Left cardiac atrium (tissue), 4 donors: ENCODE measurements at regions of chr20 and their contacts with region 1.

Region 1: GRCh38 chr20:13119583-13119982 is 101.5 kb upstream of the ISM1 start:
- DNase-seq: no peak
- ATAC-seq: peak; percentile 79 to 91

Region 2: DNA sequence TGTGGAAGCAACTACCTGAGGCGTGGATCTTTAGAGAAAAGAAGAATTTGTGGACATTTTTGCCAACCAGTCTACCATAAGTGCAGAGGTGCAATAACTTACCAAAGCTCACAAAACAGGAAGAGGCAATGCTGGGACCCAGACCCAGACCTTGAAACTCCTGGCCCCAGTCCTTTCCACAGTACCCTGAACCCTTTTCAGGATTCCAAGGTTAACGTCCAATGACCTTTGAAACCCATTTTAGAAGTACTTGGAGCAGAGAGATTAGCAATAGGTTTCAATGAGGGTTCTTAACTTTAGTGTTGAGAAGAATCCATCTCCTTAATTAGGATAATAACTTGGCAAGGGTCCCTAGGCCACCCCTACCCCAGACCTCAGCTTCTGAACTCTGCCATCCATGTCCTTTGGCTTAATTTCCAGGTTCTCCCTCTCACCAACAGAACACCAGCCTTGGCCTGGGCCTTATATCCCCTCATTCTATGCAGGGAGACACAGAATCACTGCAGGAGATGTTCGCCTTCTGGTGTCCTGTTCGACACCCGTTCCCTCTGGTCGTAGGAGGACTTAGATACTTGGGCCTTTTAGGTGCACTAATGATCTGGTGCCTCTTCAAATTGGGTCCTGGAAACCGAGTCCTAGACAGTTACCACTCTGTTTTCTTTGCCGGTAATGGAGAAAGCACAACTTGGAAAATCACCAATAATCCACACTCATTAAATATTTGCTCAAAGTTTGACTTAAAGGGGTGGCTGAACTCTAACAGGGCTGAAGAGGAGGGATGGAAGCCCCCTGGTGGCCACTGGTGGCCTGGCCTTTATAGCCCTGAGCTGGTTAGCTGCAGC is 142.1 kb after region 1 on chr20:
- intact Hi-C with region 1: loop called in 1 of 2 experiments (anchors 5 kb)
- DNase-seq: peak; percentile 61
- ATAC-seq: peak; percentile 58 to 77

Region 3: DNA sequence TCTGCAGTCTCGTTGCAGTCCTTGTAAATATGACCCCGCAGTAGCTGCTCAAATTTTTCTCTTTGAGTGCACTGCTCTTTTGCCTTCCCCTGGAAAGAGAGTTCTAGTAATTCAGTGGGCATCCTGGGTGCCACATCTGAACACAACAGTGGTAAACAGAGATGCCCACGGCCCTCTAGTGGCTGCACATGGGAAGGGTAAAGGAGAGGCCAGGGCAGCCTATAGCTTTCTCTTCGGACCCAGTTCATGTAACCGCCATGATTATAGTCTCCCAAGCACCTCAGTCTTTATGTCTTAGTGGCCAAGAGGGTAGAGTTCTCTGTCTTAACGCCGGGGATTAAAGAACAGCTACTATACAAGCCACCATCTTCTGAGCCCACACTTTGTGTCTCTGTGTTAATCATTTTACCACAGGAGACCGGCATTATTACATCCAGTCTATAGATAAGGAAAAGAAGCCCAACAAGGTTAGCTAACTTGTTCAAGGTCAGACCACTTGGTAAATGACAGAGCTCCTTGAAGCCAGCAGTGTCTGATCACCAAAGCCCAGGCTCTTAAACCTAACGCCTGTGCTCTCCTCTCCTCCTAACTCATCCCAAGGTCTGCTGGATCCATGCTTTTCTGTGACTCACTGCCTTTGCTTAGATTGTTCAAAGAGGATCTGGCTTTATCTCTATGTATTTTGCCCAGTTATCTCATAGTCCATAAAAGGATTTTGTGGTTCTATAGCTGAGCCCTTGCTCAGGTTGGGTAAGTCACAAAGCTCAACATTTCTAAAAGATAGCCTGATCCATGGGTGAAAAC is 183.3 kb after region 1 on chr20:
- intact Hi-C with region 1: loop called (anchors 2 to 10 kb)
- DNase-seq: no peak
- ATAC-seq: peak; percentile 42 to 61

Region 4: DNA sequence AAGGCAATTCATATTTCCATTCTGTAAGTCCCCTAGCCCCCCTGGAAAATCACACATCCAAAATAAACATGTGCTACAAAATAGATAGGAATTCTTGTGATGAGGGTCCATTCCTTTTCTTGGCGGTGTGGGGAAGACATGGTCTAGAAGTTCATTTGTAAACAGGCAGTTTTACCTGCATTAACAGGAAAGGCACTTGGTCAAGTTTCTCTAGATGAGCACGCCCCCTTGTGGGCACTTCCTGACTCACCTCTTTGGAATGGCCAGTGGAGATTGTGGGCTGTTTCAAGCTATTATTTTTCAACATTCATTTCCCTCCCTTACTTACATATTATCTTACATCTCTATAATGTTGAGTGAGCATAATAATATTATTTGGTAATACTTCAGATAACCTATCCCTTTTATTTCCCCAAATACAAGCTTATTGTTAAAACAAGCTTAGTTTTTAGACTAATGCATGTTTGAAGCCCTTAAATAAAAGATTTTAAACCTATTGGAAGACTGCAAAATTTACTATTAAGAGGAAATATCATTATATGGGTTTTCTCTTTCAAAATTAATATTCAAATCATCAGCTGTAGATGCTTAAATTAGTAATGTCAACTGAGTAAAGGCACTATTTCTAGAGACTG is 427.0 kb after region 1 on chr20:
- intact Hi-C with region 1: loop called in 1 of 2 experiments (anchors 5 kb)
- DNase-seq: peak; percentile 79
- ATAC-seq: peak in 1 of 2 donors; percentile 49

Region 5: DNA sequence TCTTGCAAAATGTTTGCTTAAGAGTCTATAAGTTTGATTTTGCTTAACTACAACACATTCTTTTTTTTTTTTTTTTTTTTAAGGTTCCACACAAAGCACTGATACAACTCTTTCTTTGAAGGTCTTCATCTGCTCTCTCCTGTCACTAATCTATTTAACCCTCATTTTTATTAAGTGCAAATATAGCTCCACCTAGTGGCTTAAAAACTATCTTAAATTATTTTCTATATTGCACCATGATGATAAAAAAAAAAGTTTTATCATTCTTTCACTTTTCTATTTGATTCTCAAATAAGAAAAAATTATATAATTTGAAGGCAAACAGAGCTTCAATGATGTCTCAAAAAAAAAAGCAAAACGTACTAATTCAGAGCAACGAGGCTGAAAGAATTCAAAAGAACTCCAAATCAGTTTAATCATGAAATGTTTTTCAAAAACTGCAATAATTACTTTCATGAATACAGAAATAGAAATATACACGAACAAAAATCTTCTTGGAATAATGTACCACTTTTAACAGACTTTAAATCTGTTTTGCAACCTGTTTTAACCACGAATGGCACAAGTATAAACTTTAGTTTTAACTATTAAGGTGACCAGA is 652.4 kb after region 1 on chr20:
- intact Hi-C with region 1: loop called in 1 of 2 experiments (anchors 10 kb)
- DNase-seq: no peak
- ATAC-seq: no peak